A549 (cell line): ENCODE measurements at regions of chr15 and their contacts with region 1.

Region 1: GRCh38 chr15:63048115-63048775 is 5.7 kb downstream of the TPM1 start:
- DNase-seq: peak; percentile 96 to 98
- ATAC-seq: peak; percentile 69 to 76
- H3K4me3 ChIP-seq: peak overlapping the region; percentile 87
- H3K27ac ChIP-seq: peak overlapping the region; percentile 94 to 97
- H3K4me1 ChIP-seq: peaks cover 66% of the 10 kb centered on the region
- CTCF ChIP-seq: peak; percentile 98
- EP300 ChIP-seq: peak in 1 of 2 experiments; percentile 50; a peak in 1 of 5 replicates
- POLR2A ChIP-seq: peak; percentile 63
- RAD21 ChIP-seq: peak; percentile 75 to 94

Region 2: DNA sequence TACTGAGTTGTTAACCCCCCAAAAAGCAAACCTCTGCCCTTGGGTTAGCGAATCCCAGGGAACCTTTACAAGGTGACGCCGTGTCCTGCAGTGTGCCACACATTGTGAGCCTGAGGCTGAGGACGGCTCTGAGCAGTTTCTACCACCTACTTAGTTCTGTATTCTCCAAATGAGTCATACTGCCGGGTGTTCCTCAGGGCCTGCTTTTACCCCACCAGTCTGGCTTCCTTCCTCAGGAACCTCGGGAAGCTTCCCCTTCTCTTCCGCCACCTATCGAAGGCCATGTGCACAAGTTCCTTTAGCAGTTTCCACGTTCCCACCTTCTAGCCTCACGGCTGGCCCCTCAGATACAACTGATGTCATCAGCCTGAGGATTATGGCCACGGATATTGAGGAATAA is 389.7 kb before region 1 on chr15:
- CTCF ChIA-PET with region 1: no interaction called
- POLR2A ChIA-PET with region 1: no interaction called
- DNase-seq: no peak
- ATAC-seq: no peak
- H3K4me3 ChIP-seq: no peak overlapping the region
- H3K27ac ChIP-seq: no peak overlapping the region
- H3K4me1 ChIP-seq: no peaks in the 10 kb centered on the region
- CTCF ChIP-seq: no peak
- EP300 ChIP-seq: no peak
- POLR2A ChIP-seq: no peak
- RAD21 ChIP-seq: no peak

Region 3: DNA sequence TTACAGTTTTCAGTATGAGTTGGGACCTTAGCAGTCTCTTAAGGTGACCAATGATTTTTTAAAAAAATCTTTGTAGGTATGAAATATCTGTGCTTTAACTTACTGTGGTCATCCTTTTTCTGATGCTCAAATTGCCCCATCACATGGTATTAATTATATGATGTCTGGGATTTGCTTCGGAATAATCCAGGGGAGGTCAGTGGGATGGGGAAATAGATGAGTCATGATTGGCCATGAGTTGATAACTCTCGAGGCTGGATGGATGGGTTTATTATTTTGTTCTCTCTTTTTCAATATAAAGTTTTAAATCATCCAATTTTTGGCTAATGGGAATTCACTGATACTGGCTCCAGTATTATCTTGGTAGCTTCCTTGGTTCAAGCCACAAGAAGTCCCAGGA is 376.0 kb before region 1 on chr15:
- CTCF ChIA-PET with region 1: no interaction called
- POLR2A ChIA-PET with region 1: no interaction called
- DNase-seq: no peak
- ATAC-seq: no peak
- H3K4me3 ChIP-seq: no peak overlapping the region
- H3K27ac ChIP-seq: no peak overlapping the region
- H3K4me1 ChIP-seq: no peaks in the 10 kb centered on the region
- CTCF ChIP-seq: no peak
- EP300 ChIP-seq: no peak
- POLR2A ChIP-seq: no peak
- RAD21 ChIP-seq: no peak

Region 4: DNA sequence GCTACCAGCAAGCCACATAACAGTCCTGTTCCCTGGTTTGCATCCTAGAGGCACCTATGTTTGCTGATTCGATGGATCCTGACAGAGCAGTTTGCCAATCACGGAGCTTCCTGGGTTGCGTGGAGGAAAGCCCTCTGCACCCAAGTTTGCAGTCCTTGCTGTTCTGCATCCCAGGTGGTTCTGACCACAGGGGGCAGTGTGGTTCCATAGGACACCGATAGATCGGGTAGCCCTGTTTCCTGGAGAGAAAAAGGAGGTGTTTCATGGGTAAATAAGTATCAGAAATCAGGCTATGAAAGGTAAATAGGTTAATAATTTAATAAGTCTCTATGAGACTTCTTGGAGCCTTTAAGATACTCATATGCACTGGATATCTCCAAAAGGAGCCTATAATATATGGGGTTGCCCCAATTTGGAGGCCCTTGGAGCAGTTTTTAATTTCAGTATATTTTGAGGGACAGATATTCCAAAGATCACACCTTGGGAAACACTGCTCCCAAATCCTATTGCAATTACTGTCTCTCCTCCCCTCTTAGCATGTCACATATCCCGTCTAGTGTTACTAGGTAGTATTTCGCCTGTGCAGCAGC is 200.2 kb before region 1 on chr15:
- CTCF ChIA-PET with region 1: interaction called, 93 read pairs
- POLR2A ChIA-PET with region 1: interaction called, 41 read pairs
- DNase-seq: peak; percentile 79 to 89
- ATAC-seq: peak in 1 of 2 experiments; percentile 58; a peak in 3 of 6 replicates
- H3K4me3 ChIP-seq: no peak overlapping the region
- H3K27ac ChIP-seq: peak overlapping the region; percentile 91
- H3K4me1 ChIP-seq: peaks cover 77% of the 10 kb centered on the region
- CTCF ChIP-seq: peak; percentile 70
- EP300 ChIP-seq: no peak
- POLR2A ChIP-seq: no peak
- RAD21 ChIP-seq: peak; percentile 84 to 93

Region 5: GRCh38 chr15:62912808-62913207 is 135.4 kb before region 1 on chr15:
- CTCF ChIA-PET with region 1: interaction called, 15 read pairs
- POLR2A ChIA-PET with region 1: no interaction called
- DNase-seq: peak in 1 of 2 experiments; percentile 39
- ATAC-seq: peak; percentile 89 to 92
- H3K4me3 ChIP-seq: no peak overlapping the region
- H3K27ac ChIP-seq: peak overlapping the region in 1 of 2 experiments; percentile 34; a peak in 2 of 6 replicates
- H3K4me1 ChIP-seq: peaks cover 12% of the 10 kb centered on the region
- CTCF ChIP-seq: no peak
- EP300 ChIP-seq: no peak
- POLR2A ChIP-seq: no peak
- RAD21 ChIP-seq: 0 out of 5 replicates have a peak, but pooled peaks of 1 of the 2 experiments have one; percentile 12

Region 6: DNA sequence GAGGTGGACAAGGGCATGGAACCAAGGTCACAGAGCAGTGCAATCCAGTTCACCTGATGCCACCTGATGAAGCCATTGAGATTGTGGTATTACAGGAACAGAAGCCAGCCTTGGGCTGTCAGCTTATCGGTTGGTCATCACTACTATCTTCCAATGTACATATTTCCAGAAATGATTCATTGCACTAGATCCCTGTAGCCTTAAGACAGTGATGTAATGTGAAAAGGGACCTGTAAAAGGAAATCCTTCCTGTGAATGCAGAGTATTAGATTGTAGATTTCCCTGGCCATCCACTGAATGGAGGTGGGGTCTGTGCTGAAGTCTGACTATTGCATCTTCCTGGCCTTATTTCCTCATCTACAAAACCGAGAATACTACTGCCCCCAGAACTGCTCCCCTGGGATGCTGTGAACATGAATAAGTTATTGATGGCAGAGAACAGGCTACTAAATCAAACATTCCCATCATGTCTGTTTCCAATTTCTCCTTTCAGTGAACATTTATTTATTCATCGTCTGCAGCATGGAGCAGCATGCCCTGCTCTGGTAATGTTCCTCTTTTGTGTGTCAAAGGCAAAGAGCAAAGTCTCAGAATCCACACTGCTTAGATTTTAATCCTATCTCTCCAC is 53.1 kb before region 1 on chr15:
- CTCF ChIA-PET with region 1: interaction called, 11 read pairs
- POLR2A ChIA-PET with region 1: interaction called, 3 read pairs
- DNase-seq: peak; percentile 34 to 56
- ATAC-seq: peak; percentile 81 to 86
- H3K4me3 ChIP-seq: no peak overlapping the region
- H3K27ac ChIP-seq: peak overlapping the region in 1 of 2 experiments; percentile 57; a peak in 3 of 6 replicates
- H3K4me1 ChIP-seq: peaks cover 19% of the 10 kb centered on the region
- CTCF ChIP-seq: no peak
- EP300 ChIP-seq: no peak
- POLR2A ChIP-seq: no peak
- RAD21 ChIP-seq: no peak

Region 7: GRCh38 chr15:63107895-63108546 is 59.8 kb after region 1 on chr15:
- CTCF ChIA-PET with region 1: interaction called, 13 read pairs
- POLR2A ChIA-PET with region 1: interaction called, 4 read pairs
- DNase-seq: peak; percentile 93 to 99
- ATAC-seq: peak; percentile 96
- H3K4me3 ChIP-seq: no peak overlapping the region
- H3K27ac ChIP-seq: peak overlapping the region; percentile 84 to 92
- H3K4me1 ChIP-seq: peaks cover 33% of the 10 kb centered on the region
- CTCF ChIP-seq: no peak
- EP300 ChIP-seq: peak; percentile 98 to 99
- POLR2A ChIP-seq: no peak
- RAD21 ChIP-seq: peak; percentile 43 to 77

Region 8: GRCh38 chr15:63157118-63157843 is 109.0 kb after region 1 on chr15 and contains the start of gene RPS27L:
- CTCF ChIA-PET with region 1: interaction called, 10 read pairs
- POLR2A ChIA-PET with region 1: interaction called, 14 read pairs
- DNase-seq: peak; percentile 96 to 98
- ATAC-seq: peak; percentile 98
- H3K4me3 ChIP-seq: peak within 1 kb of the TSS; percentile 74
- H3K27ac ChIP-seq: peak within 1 kb of the TSS; percentile 95 to 98
- H3K4me1 ChIP-seq: peaks cover 32% of the 10 kb centered on the region
- CTCF ChIP-seq: no peak
- EP300 ChIP-seq: no peak
- POLR2A ChIP-seq: peak; percentile 93
- RAD21 ChIP-seq: no peak; a peak in 2 of 5 replicates
- polyA plus RNA-seq, gene RPS27L: 742 and 748 TPM in 2 replicates